ENCODE measurements at regions of chr15 and their contacts with region 1.

Region 1: DNA sequence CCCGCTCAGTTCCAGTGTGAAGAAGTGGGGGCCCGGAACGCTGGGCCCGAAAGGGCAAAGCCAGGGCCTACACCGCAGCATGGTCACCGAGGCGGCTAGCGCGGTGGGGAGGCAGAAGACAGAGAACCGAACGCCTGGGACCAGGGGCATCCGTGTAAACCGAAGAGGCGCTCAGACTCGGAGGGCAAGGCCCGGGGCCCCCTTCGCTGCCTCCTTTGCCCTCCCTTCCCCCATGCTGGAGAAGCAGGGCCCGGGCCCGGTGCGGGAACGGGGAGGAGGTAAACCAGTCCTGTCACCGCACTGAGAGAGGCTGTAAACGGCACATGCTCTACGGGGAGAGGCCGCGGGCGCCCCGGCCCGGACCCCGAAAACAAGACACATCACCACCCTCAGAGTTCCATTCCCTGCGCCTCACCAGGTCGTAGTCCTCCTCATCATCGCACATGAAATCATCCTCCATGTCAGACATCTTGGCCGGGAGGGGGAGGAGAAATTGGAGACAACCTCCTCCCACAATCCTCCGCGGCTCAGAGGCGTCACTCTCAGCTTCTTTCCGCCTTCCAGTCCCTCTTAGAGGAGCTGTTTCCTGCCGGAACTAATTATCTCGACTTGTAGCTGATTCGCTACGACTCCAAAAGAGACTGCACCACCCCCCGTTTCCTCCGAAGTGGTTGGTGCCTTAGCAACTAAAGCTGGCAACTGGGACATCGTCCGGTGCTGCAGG is at the start of gene COPS2:
- DNase-seq: peak; percentile 74

Region 2: GRCh38 chr15:49169880-49170597 is 14.8 kb after region 1 on chr15 and contains the start of gene GALK2:
- CTCF ChIA-PET with region 1: no interaction called
- POLR2A ChIA-PET with region 1: interaction called, 22 read pairs
- DNase-seq: peak; percentile 78